ENCODE measurements at regions of chr2 and their contacts with region 1.

Region 1: GRCh38 chr2:172588931-172589330 is 33.0 kb downstream of the PDK1 start:
- DNase-seq: no peak
- ATAC-seq: no peak
- H3K4me3 ChIP-seq: no peak overlapping the region
- H3K27ac ChIP-seq: no peak overlapping the region
- H3K4me1 ChIP-seq: no peaks in the 10 kb centered on the region
- CTCF ChIP-seq: no peak
- EP300 ChIP-seq: no peak
- POLR2A ChIP-seq: no peak
- RAD21 ChIP-seq: no peak

Region 2: DNA sequence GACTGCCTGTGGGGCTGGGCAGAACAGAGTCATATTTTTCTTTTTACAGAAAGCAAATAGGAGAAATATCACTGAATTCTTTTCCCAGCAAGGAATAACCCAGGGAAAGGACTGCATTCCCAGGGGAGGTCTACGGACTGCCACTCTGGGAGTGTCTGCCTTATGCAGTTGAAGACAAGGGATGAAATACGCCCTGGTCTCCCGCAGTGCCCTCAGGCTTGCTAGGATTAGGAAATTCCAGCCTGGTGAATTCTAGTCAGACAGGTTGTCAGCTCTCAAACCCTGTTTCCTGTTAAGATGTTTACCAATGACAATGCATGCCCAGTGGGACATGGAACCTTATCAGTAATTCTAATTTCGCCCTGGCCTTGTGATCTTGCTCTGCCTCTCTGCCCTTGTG is 63.3 kb before region 1 on chr2:
- CTCF ChIA-PET with region 1: no interaction called
- POLR2A ChIA-PET with region 1: no interaction called
- DNase-seq: no peak
- ATAC-seq: no peak
- H3K4me3 ChIP-seq: no peak overlapping the region
- H3K27ac ChIP-seq: no peak overlapping the region
- H3K4me1 ChIP-seq: no peaks in the 10 kb centered on the region
- CTCF ChIP-seq: no peak
- EP300 ChIP-seq: no peak
- POLR2A ChIP-seq: no peak
- RAD21 ChIP-seq: no peak

Region 3: DNA sequence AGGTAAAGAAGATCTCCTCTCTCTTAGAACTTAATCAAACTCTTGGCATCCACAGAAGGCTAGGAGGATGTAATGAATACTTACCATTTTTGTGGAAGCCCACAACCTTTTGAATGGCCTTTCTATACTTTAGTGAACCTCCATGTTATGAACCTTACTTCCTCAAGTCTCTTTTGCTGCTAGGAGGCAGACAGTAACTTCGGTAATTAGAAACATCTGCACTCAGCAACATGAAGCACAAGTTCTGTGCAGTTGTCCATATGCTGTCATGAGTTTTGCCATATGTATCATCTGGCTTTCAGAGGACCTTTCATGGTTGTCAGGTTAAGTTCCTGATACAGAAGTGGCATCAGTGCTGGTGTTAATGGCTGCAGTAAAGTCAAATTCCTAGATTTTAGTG is 17.4 kb after region 1 on chr2:
- CTCF ChIA-PET with region 1: interaction called, 26 read pairs
- POLR2A ChIA-PET with region 1: no interaction called
- DNase-seq: no peak
- ATAC-seq: no peak
- H3K4me3 ChIP-seq: no peak overlapping the region
- H3K27ac ChIP-seq: no peak overlapping the region
- H3K4me1 ChIP-seq: no peaks in the 10 kb centered on the region
- CTCF ChIP-seq: no peak
- EP300 ChIP-seq: no peak
- POLR2A ChIP-seq: no peak
- RAD21 ChIP-seq: no peak

Region 4: DNA sequence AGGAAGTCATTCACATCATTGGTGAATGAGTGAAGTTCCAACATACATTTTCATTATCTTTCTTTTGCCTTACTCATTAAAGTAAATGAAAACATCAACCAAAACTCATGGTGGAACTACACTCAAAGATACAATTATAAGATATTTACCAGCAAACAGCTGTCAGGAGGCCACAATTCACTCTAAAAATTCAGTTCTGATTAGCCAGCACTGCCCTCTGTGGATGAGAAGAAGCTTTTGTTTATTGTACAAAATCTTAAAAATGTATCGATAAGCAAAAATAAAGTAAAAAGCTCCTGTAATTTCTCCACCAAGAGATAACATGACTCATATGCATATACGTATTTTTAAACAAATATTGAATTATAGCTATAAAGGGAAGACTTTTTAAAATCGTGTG is 73.2 kb after region 1 on chr2:
- CTCF ChIA-PET with region 1: interaction called, 10 read pairs
- POLR2A ChIA-PET with region 1: no interaction called
- DNase-seq: no peak
- ATAC-seq: no peak
- H3K4me3 ChIP-seq: no peak overlapping the region
- H3K27ac ChIP-seq: no peak overlapping the region
- H3K4me1 ChIP-seq: no peaks in the 10 kb centered on the region
- CTCF ChIP-seq: no peak
- EP300 ChIP-seq: no peak
- POLR2A ChIP-seq: no peak
- RAD21 ChIP-seq: no peak

Region 5: GRCh38 chr2:172726172-172726735 is 137.3 kb after region 1 on chr2:
- CTCF ChIA-PET with region 1: interaction called, 10 read pairs
- POLR2A ChIA-PET with region 1: no interaction called
- DNase-seq: peak in 1 of 2 experiments; percentile 43
- ATAC-seq: peak in 1 of 2 experiments; percentile 75; a peak in 3 of 6 replicates
- H3K4me3 ChIP-seq: no peak overlapping the region
- H3K27ac ChIP-seq: peak overlapping the region; percentile 42 to 48
- H3K4me1 ChIP-seq: peaks cover 13% of the 10 kb centered on the region
- CTCF ChIP-seq: no peak
- EP300 ChIP-seq: no peak
- POLR2A ChIP-seq: no peak
- RAD21 ChIP-seq: no peak